GM12878 (cell line): ENCODE measurements at regions of chr16 and their contacts with region 1.

Region 1: DNA sequence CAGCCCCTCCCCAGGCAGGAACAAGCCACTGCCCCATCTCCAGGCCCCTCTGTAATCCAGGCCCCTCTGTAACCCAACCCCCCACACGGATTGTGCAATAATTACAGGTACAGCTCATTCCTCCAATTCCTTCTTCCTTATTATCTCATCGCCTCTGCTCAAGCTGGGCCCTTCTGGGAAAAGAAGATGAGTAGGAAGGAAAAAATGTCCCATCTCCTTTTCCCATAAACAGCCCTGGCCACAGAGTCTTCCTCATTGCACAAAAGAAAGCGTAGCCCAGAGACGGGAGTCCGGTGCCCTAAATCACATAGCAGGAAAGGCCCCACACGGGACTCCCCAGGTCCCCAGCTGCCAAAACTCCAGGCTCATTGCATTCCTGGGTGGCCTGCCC is 3.6 kb upstream of the LITAFD start:
- DNase-seq: no peak
- ATAC-seq: no peak
- H3K4me3 ChIP-seq: no peak overlapping the region
- H3K27ac ChIP-seq: no peak overlapping the region
- H3K4me1 ChIP-seq: peaks cover 6% of the 10 kb centered on the region
- H3K27me3 ChIP-seq: no peaks in the 10 kb centered on the region
- CTCF ChIP-seq: no peak
- EP300 ChIP-seq: no peak
- POLR2A ChIP-seq: no peak
- RAD21 ChIP-seq: no peak

Region 2: DNA sequence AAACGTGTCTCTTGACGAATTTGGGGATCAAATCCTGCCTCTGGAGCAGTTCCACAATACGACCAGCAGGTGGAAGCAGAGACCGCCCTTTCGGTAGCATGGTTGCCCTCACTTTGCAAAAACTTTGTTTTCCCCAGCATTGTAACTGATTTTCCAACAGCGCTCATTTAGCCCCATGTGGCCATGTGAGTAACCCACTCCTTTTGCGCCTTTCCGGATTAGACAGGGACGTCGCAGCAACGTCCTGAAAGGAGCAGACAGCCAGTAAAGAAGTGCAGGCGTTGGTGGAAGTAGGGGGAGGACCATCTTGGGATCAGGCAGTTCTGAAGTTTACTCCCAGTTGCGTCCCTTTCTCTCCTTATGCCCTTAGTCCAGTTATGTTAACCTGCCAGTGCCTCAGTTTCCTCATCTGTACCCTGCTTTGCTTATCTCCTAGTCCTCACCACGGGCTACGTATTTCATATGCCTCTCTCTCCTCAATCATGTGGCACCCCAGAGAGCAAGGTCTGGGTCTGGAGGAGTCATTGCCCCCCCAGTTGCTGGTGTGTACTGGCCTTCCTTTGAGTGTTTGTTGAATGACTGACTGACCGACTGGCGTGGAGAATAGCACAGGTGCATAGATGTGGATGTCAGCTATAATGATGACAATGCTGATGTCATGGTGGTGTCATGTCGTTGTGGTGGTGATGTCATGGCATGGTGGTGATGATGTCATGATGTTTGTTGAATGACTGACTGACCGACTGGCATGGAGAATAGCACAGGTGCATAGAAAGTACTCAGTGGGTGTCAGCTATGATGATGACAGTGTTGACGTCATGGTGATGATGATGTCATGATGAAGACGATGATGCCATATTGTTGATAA is 310.5 kb before region 1 on chr16:
- CTCF ChIA-PET with region 1: interaction called, 29 read pairs
- POLR2A ChIA-PET with region 1: no interaction called
- RAD21 ChIA-PET with region 1: interaction called, 18 read pairs
- SMC1A ChIA-PET with region 1: interaction called, 6 read pairs
- in situ Hi-C with region 1: loop called (anchors 5 kb)
- intact Hi-C with region 1: loop called (anchors 1 kb)
- DNase-seq: peak; percentile 66
- ATAC-seq: peak; percentile 96
- H3K4me3 ChIP-seq: no peak overlapping the region
- H3K27ac ChIP-seq: no peak overlapping the region
- H3K4me1 ChIP-seq: no peaks in the 10 kb centered on the region
- H3K27me3 ChIP-seq: no peaks in the 10 kb centered on the region; a peak in 1 of 4 replicates
- CTCF ChIP-seq: peak; percentile 88 to 99 (median 95)
- EP300 ChIP-seq: no peak
- POLR2A ChIP-seq: no peak
- RAD21 ChIP-seq: peak; percentile 96

Region 3: DNA sequence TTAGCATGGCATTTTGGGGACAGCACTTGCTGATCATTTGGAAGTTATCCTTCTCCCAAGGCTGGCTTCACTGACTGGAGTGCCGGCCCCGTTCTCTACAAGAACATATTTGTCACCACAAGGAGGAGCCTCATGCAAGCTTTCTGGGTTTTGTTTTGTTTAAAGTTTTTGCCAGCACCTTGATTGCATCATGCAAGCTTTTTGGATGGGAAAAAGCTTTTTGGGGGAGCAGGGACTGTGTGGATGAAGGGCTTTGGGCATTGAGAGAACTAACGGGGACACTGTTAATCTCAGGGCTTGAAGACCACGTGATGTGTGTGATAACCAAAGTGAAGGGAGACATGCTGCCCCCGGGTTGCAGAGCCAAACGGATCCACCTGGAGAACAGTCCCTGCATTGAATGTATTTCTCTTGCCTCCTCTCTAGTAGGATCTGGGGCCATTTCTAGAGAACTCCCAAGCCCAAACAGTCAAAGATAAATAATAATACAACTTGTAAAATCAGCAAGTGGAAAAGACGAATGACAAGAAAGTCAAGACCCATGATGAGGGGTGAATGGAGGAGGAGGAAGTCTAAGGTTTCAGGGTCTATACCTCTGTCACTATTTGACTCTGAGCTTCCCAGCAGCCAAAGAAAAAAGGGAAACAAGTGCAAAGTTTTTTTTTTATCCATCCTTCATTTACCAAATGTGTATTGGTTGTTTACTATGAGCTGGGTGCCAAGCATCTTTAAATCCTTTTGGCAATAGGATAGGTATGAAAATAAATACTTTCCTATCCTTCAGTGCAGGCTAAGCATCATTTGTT is 305.4 kb before region 1 on chr16:
- CTCF ChIA-PET with region 1: interaction called, 29 read pairs
- POLR2A ChIA-PET with region 1: no interaction called
- RAD21 ChIA-PET with region 1: interaction called, 18 read pairs
- SMC1A ChIA-PET with region 1: interaction called, 6 read pairs
- in situ Hi-C with region 1: loop called (anchors 5 kb)
- intact Hi-C with region 1: no loop called
- DNase-seq: no peak
- ATAC-seq: peak; percentile 56
- H3K4me3 ChIP-seq: no peak overlapping the region
- H3K27ac ChIP-seq: no peak overlapping the region
- H3K4me1 ChIP-seq: no peaks in the 10 kb centered on the region
- H3K27me3 ChIP-seq: no peaks in the 10 kb centered on the region; a peak in 2 of 4 replicates
- CTCF ChIP-seq: peak; percentile 39 to 64 (median 54); a peak in 5 of 6 replicates
- EP300 ChIP-seq: no peak
- POLR2A ChIP-seq: no peak
- RAD21 ChIP-seq: peak; percentile 86

Region 4: GRCh38 chr16:8660841-8661301 is 217.6 kb before region 1 on chr16:
- CTCF ChIA-PET with region 1: interaction called, 72 read pairs
- POLR2A ChIA-PET with region 1: interaction called, 4 read pairs
- RAD21 ChIA-PET with region 1: interaction called, 32 read pairs
- SMC1A ChIA-PET with region 1: interaction called, 37 read pairs
- in situ Hi-C with region 1: loop called (anchors 5 kb)
- intact Hi-C with region 1: loop called (anchors 1 kb)
- DNase-seq: no peak
- ATAC-seq: peak; percentile 86
- H3K4me3 ChIP-seq: no peak overlapping the region
- H3K27ac ChIP-seq: no peak overlapping the region
- H3K4me1 ChIP-seq: peaks cover under 1% of the 10 kb centered on the region; the same call in 1 of the 2 replicates
- H3K27me3 ChIP-seq: no peaks in the 10 kb centered on the region
- CTCF ChIP-seq: peak; percentile 42 to 69 (median 59)
- EP300 ChIP-seq: no peak
- POLR2A ChIP-seq: no peak
- RAD21 ChIP-seq: peak; percentile 75

Region 5: GRCh38 chr16:8818504-8819270 is 59.8 kb before region 1 on chr16:
- CTCF ChIA-PET with region 1: interaction called, 22 read pairs
- POLR2A ChIA-PET with region 1: interaction called, 4 read pairs
- RAD21 ChIA-PET with region 1: interaction called, 6 read pairs
- SMC1A ChIA-PET with region 1: interaction called, 6 read pairs
- in situ Hi-C with region 1: no loop called
- intact Hi-C with region 1: no loop called
- DNase-seq: peak; percentile 57
- ATAC-seq: peak; percentile 88
- H3K4me3 ChIP-seq: no peak overlapping the region
- H3K27ac ChIP-seq: peak overlapping the region; percentile 66
- H3K4me1 ChIP-seq: peaks cover 18% of the 10 kb centered on the region
- H3K27me3 ChIP-seq: no peaks in the 10 kb centered on the region
- CTCF ChIP-seq: no peak
- EP300 ChIP-seq: peak; percentile 51 to 68; a peak in 1 of 4 replicates
- POLR2A ChIP-seq: no peak
- RAD21 ChIP-seq: no peak

Region 6: DNA sequence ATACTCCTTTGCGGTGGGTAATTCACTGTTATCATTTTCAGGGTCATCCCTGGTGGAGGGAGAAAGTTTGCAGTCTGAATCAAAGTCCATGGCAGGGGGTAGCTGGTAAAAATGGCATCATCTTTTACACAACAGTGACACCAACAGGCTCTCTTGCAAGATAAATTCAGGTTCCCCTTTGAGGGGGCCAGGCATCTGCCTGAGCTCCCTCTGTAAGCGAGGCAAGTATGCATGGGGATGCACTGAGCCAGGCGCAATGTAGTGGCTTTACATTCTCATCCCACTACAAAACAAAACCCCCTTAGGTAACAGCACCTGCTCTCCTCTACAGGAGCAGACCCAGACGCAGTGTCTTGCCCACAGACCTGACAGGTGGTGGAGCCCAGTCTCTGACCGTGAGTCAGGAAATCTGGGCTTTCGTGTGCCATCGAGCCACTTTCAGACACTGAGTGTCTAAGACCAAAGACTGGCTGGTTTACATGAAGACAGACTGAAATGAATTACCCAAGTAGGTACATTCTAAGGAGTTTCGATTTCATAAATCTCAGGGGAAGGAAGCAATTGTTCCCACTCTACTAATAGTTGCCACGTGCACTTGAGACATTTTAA is 21.3 kb after region 1 on chr16:
- CTCF ChIA-PET with region 1: interaction called, 18 read pairs
- POLR2A ChIA-PET with region 1: no interaction called
- RAD21 ChIA-PET with region 1: interaction called, 3 read pairs
- SMC1A ChIA-PET with region 1: no interaction called
- in situ Hi-C with region 1: no loop called
- intact Hi-C with region 1: no loop called
- DNase-seq: no peak
- ATAC-seq: peak; percentile 90
- H3K4me3 ChIP-seq: no peak overlapping the region
- H3K27ac ChIP-seq: peak overlapping the region; percentile 18; the same call in 1 of the 2 replicates
- H3K4me1 ChIP-seq: peaks cover 5% of the 10 kb centered on the region
- H3K27me3 ChIP-seq: no peaks in the 10 kb centered on the region
- CTCF ChIP-seq: peak in 1 of 3 experiments; percentile 31; a peak in 1 of 6 replicates
- EP300 ChIP-seq: no peak
- POLR2A ChIP-seq: no peak
- RAD21 ChIP-seq: no peak